Heart left ventricle (tissue), 16 donors: ENCODE measurements at regions of chr2 and their contacts with region 1.

Region 1: DNA sequence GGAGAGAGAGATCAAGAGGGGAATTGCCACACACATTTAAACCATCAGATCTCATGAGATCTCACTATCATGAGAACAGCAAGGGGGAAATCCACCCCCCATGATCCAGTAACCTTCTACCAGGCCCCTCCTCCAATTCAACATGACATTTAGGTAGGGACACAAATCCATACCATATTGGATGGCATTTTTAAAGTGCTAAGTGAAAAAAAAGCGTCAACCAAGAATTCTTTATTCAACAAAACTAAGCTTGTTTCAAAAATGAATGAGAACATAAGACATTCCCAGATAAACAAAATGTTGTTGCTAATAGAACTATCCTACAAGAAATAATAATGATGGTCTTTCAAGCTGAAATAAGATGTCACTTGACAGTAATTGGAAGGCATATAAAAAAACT is 626.2 kb upstream of the LRRTM1 start:
- DNase-seq: no peak
- ATAC-seq: no peak
- H3K4me3 ChIP-seq: no peak overlapping the region
- H3K27ac ChIP-seq: no peak overlapping the region
- H3K4me1 ChIP-seq: no peaks in the 10 kb centered on the region
- H3K27me3 ChIP-seq: no peaks in the 10 kb centered on the region
- CTCF ChIP-seq: no peak
- POLR2A ChIP-seq: no peak

Region 2: GRCh38 chr2:80896576-80896975 is 34.2 kb before region 1 on chr2:
- intact Hi-C with region 1: no loop called
- DNase-seq: no peak
- ATAC-seq: no peak
- H3K4me3 ChIP-seq: no peak overlapping the region
- H3K27ac ChIP-seq: no peak overlapping the region
- H3K4me1 ChIP-seq: no peaks in the 10 kb centered on the region
- H3K27me3 ChIP-seq: no peaks in the 10 kb centered on the region
- CTCF ChIP-seq: no peak
- POLR2A ChIP-seq: no peak

Region 3: DNA sequence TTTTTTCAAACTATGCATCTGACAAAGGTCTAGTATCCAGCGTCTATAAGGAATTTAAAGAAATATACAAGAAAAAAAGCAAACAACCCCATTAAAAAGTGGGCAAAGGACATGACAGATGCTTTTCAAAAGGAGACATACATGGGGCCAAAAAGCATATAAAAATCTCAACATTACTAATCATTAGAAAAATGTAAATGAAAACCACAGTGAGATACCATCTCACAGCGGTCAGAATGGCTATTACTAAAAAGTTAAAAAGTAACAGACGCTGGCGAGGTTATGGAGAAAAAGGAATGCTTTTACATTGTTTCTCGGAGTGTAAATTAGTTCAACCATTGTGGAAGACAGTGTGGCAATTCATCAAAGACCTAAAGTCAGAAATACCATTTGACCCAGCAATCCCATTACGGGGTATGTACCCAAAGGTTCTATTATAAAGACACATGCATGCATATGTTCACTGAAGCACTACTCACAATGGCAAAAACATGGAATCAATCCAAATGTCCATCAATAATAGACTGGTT is 16.9 kb after region 1 on chr2:
- intact Hi-C with region 1: loop called in 1 of 10 experiments (anchors 1 kb)
- DNase-seq: no peak
- ATAC-seq: no peak
- H3K4me3 ChIP-seq: no peak overlapping the region
- H3K27ac ChIP-seq: no peak overlapping the region
- H3K4me1 ChIP-seq: no peaks in the 10 kb centered on the region
- H3K27me3 ChIP-seq: no peaks in the 10 kb centered on the region
- CTCF ChIP-seq: no peak
- POLR2A ChIP-seq: no peak

Region 4: GRCh38 chr2:80968450-80968849 is 37.7 kb after region 1 on chr2:
- intact Hi-C with region 1: no loop called
- DNase-seq: no peak
- ATAC-seq: no peak
- H3K4me3 ChIP-seq: no peak overlapping the region
- H3K27ac ChIP-seq: no peak overlapping the region
- H3K4me1 ChIP-seq: no peaks in the 10 kb centered on the region
- H3K27me3 ChIP-seq: no peaks in the 10 kb centered on the region
- CTCF ChIP-seq: no peak
- POLR2A ChIP-seq: no peak